MCF 10A (cell line): ENCODE measurements at regions of chr1 and their contacts with region 1.

Region 1: DNA sequence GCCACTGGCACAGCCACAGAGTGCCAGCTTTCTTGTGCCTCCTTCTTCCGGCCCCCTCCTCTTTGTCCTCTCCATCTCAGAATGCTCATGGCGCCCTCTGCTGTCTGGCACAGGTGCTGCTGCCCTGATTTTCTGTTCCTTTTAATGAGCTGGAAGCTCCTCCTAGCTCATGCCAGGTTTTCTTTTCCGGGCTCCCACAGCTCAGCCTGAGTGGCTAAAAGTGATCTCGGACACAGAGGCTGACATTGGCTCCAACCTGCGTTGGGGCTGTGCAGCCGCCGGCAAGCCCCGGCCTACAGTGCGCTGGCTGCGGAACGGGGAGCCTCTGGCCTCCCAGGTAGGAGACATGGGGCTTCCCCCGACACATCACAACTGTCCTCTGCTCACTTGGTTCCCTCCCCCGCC is 18.7 kb downstream of the CNTN2 start:
- DNase-seq: peak; percentile 85
- H3K4me3 Mint-ChIP-seq: no peak overlapping the region
- H3K27ac Mint-ChIP-seq: no peak overlapping the region
- H3K4me1 Mint-ChIP-seq: no peaks in the 10 kb centered on the region
- H3K27me3 Mint-ChIP-seq: peaks cover 21% of the 10 kb centered on the region
- CTCF ChIP-seq: peak; percentile 99

Region 2: GRCh38 chr1:204323887-204324286 is 737.8 kb before region 1 on chr1:
- CTCF ChIA-PET with region 1: no interaction called
- POLR2A ChIA-PET with region 1: no interaction called
- intact Hi-C with region 1: no loop called
- DNase-seq: peak; percentile 81
- H3K4me3 Mint-ChIP-seq: no peak overlapping the region
- H3K27ac Mint-ChIP-seq: peak overlapping the region; percentile 2
- H3K4me1 Mint-ChIP-seq: peaks cover 54% of the 10 kb centered on the region
- H3K27me3 Mint-ChIP-seq: no peaks in the 10 kb centered on the region
- CTCF ChIP-seq: no peak

Region 3: GRCh38 chr1:204961765-204962419 is 99.8 kb before region 1 on chr1:
- CTCF ChIA-PET with region 1: interaction called, 35 read pairs
- POLR2A ChIA-PET with region 1: no interaction called
- intact Hi-C with region 1: no loop called
- DNase-seq: no peak
- H3K4me3 Mint-ChIP-seq: no peak overlapping the region
- H3K27ac Mint-ChIP-seq: no peak overlapping the region
- H3K4me1 Mint-ChIP-seq: no peaks in the 10 kb centered on the region
- H3K27me3 Mint-ChIP-seq: peaks cover 91% of the 10 kb centered on the region
- CTCF ChIP-seq: no peak

Region 4: DNA sequence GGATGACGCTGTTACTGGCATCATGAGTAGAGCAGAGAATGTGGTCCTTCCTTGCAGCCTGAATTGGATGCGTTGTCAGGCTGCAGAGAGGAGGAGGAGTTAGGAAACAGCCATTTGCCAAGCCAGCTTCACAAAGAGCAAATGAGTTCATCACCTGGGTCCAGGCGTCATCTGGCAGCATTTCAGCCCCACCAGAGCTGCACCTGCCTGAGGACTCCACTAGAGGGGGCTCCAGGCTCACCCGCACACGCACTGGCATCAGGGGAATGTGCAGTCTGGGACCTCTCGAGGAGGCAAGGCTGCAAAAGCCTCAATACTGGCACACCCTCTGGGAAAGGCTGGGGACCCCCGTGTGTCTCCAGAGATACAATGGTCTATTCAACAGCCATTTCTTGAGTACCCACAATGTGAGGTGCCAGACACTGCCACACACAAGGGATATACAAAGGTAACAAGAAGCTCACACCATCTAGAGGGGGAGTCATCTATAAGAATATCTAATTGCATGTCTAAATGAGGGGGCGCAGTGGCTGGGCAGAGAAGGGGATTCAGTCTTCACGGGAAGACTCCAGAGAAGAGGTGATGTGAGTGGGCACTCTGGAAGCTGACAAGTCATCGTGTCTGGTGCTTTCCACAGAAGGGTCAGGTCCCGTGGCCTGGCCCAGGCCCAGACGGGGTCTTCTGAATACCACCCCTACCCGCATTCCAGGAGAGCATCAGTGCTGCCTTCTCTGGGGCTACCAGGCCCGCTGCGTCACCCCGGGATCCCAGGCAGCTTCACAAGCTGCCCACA is 72.2 kb before region 1 on chr1:
- CTCF ChIA-PET with region 1: interaction called, 331 read pairs
- POLR2A ChIA-PET with region 1: interaction called, 14 read pairs
- intact Hi-C with region 1: loop called (anchors 1 kb)
- DNase-seq: peak; percentile 91
- H3K4me3 Mint-ChIP-seq: no peak overlapping the region
- H3K27ac Mint-ChIP-seq: no peak overlapping the region
- H3K4me1 Mint-ChIP-seq: no peaks in the 10 kb centered on the region
- H3K27me3 Mint-ChIP-seq: peaks cover 99% of the 10 kb centered on the region
- CTCF ChIP-seq: peak; percentile 100

Region 5: GRCh38 chr1:205020466-205020865 is 41.2 kb before region 1 on chr1:
- CTCF ChIA-PET with region 1: interaction called, 47 read pairs
- POLR2A ChIA-PET with region 1: no interaction called
- intact Hi-C with region 1: no loop called
- DNase-seq: no peak
- H3K4me3 Mint-ChIP-seq: no peak overlapping the region
- H3K27ac Mint-ChIP-seq: no peak overlapping the region
- H3K4me1 Mint-ChIP-seq: no peaks in the 10 kb centered on the region
- H3K27me3 Mint-ChIP-seq: peaks cover 70% of the 10 kb centered on the region
- CTCF ChIP-seq: no peak

Region 6: GRCh38 chr1:205048382-205048781 is 13.3 kb before region 1 on chr1:
- CTCF ChIA-PET with region 1: interaction called, 111 read pairs
- POLR2A ChIA-PET with region 1: interaction called, 3 read pairs
- intact Hi-C with region 1: no loop called
- DNase-seq: no peak
- H3K4me3 Mint-ChIP-seq: no peak overlapping the region
- H3K27ac Mint-ChIP-seq: no peak overlapping the region
- H3K4me1 Mint-ChIP-seq: no peaks in the 10 kb centered on the region
- H3K27me3 Mint-ChIP-seq: peaks cover 100% of the 10 kb centered on the region
- CTCF ChIP-seq: no peak

Region 7: DNA sequence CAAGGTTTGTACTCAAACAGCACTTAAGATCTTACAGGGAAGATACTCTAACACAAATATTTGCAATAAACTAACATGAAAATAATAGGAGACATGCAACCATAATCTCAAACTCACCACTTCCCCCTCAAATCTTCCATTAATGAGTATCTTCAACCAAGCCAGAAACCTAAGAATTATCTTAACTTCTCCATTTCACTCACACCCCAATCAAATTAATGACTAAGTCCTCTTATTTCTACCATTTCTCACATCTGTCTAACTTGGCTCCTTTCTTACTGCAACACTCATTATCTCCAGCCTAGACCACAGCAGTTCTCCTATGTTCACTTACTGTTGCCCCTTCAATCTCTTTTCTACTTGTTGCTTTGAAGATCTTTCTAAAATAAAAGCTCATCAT is 49.7 kb after region 1 on chr1:
- CTCF ChIA-PET with region 1: interaction called, 21 read pairs
- POLR2A ChIA-PET with region 1: no interaction called
- intact Hi-C with region 1: no loop called
- DNase-seq: no peak
- H3K4me3 Mint-ChIP-seq: no peak overlapping the region
- H3K27ac Mint-ChIP-seq: no peak overlapping the region
- H3K4me1 Mint-ChIP-seq: no peaks in the 10 kb centered on the region
- H3K27me3 Mint-ChIP-seq: no peaks in the 10 kb centered on the region
- CTCF ChIP-seq: no peak

Region 8: DNA sequence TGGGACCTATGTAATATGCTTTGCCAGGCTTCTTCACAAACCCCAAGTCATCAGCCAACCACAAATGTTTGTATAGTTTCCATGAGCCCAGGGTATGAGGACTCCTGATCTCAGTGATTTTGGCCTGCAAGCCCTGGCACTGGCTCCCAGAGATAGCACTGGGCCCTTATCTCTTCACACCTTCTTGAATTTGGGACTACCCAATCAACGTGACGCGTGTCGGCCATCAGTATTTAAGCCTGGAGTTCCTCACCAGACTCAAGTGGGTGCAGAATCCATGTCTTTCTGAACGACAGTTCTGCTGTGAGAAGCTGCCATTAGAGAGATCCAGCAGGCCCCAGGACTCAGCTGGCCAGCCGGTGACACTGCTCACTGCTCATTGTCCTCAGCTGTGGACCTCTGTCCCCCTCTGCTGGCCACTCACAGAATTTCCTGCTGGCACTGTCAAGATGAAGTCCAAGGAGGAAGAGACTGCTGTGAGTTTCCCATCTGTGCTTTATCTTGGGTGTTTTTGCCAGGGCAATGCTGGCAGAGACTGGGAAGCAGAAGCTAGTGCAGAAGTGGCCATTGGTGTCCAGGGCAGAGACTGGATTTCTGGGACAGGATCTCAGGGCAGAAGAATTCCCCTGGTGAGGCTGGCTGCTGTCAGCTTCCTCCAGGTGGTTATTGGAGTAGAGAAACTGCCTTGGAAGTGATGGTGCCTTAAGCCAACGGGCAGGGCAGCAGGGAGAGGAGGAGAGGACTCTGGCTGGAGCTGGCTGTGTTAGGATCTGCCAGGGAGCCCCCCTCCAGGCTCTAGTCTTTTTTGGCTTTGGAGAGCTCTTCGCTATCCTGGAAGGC is 194.5 kb after region 1 on chr1:
- CTCF ChIA-PET with region 1: interaction called, 50 read pairs
- POLR2A ChIA-PET with region 1: interaction called, 3 read pairs
- intact Hi-C with region 1: loop called (anchors 1 kb)
- DNase-seq: peak; percentile 95
- H3K4me3 Mint-ChIP-seq: no peak overlapping the region
- H3K27ac Mint-ChIP-seq: no peak overlapping the region
- H3K4me1 Mint-ChIP-seq: peaks cover 31% of the 10 kb centered on the region
- H3K27me3 Mint-ChIP-seq: no peaks in the 10 kb centered on the region
- CTCF ChIP-seq: peak; percentile 100

Region 9: DNA sequence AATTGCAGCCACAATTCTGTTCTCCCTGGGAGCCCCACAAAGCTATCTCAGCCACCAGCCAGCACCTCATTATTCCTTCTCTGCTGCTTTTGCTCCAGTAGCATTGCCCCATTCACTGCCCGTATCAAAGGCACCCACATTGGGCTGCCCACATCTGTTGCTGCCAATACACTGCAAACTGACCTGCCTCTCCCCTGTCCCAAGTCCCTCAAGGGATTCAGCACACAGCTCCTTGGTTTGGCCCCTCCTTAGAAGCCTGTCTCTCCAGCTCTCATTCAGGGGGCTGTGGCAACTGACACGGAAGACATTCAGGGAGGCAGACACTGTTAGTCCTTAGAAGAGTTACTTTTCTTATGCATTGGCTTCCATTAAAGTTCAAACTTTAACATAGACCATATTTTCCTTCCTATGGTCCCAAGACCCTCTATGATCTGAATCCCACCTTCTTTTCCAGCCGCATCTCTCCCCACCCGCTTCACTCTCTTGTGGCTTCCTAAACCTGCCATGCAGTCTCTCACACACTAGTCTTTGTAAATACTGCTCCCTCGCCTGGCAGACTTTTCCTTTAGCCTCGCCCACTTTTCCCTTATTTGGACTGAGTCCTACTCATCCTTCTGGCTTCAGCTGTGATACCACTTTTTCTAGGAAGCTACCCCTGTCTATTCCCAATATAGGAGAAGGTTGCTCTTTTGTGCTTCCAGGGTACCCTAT is 314.3 kb after region 1 on chr1:
- CTCF ChIA-PET with region 1: no interaction called
- POLR2A ChIA-PET with region 1: no interaction called
- intact Hi-C with region 1: no loop called
- DNase-seq: peak; percentile 90
- H3K4me3 Mint-ChIP-seq: no peak overlapping the region
- H3K27ac Mint-ChIP-seq: no peak overlapping the region
- H3K4me1 Mint-ChIP-seq: peaks cover 36% of the 10 kb centered on the region
- H3K27me3 Mint-ChIP-seq: no peaks in the 10 kb centered on the region
- CTCF ChIP-seq: no peak

Region 10: DNA sequence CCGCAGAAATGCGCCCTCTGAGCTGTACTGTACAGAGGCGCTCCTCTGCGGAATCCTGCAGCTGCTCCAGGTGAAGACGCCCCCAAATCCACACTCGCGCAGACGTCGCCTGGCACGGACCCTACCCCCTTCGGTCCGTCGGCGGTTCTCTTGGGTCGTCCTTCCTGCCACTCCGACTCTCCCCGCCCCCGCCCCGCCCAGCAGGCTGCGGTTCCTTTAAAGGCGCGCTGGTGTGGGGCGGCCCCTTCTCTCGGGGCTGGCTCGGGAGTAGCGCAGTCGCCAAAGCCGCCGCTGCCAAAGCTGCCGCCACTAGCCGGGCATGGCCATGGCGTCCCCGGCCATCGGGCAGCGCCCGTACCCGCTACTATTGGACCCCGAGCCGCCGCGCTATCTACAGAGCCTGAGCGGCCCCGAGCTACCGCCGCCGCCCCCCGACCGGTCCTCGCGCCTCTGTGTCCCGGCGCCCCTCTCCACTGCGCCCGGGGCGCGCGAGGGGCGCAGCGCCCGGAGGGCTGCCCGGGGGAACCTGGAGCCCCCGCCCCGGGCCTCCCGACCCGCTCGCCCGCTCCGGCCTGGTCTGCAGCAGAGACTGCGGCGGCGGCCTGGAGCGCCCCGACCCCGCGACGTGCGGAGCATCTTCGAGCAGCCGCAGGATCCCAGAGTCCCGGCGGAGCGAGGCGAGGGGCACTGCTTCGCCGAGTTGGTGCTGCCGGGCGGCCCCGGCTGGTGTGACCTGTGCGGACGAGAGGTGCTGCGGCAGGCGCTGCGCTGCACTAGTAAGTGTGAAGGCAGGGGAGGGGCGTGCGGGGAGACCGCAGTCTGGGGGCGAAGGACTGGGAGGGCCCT is 1445.8 kb after region 1 on chr1 and contains the start of gene RASSF5:
- CTCF ChIA-PET with region 1: no interaction called
- POLR2A ChIA-PET with region 1: no interaction called
- intact Hi-C with region 1: no loop called
- DNase-seq: peak; percentile 87
- H3K4me3 Mint-ChIP-seq: peak within 1 kb of the TSS; percentile 72
- H3K27ac Mint-ChIP-seq: peak within 1 kb of the TSS; percentile 72
- H3K4me1 Mint-ChIP-seq: peaks cover 74% of the 10 kb centered on the region
- H3K27me3 Mint-ChIP-seq: no peaks in the 10 kb centered on the region
- CTCF ChIP-seq: no peak
- total RNA-seq, gene RASSF5: 8.3 and 9.6 TPM in 2 replicates